ENCODE measurements at regions of chr15 and their contacts with region 1.

Region 1: DNA sequence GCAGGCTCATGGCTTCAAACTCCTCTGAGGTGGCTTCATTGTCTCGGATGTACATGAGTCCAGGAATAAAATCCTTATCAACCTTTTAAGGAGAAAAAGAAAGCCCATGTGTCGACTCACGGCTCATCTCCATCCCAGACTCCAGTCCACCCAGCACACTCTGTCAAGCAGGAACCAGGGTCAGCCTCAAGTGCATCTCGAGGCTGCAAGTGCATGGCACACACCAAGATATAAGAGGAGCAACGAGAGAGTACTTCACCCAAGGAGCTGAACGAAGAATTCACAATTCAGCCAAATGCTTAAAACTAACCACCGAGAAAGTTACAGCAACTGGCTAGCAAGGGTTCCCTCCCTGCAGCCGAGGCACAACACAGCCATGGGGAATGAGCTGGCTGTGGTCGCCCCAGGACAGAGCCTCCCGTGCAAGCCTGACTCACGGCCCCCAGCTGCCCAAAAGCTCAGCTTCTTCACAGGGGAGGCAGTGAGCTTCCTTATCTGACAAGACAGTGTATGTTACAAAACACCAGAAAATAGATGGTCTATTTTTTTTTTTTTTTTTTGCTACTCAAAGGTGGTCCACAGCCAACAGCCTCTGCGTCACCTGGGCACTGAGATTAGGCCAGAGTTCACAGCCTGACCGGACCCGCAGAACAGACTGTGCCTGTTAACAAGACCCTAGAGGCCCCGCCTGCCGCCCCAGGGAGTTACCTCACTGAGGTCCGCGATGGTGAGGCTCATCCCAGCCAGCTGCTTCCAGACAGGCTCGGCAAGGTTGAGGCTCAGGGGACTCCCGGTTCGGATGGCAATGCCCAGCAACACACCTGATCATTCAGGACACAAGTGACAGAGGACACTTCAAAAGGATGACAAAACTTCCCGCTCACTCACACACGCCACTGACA is 15.9 kb upstream of the OCA2 start:
- DNase-seq: peak in 1 of 3 donors; percentile 37
- ATAC-seq: no peak
- H3K4me3 ChIP-seq: no peak overlapping the region
- H3K27ac ChIP-seq: no peak overlapping the region
- H3K4me1 ChIP-seq: no peaks in the 10 kb centered on the region
- H3K27me3 ChIP-seq: no peaks in the 10 kb centered on the region

Region 2: GRCh38 chr15:28080386-28080785 is 34.6 kb before region 1 on chr15:
- intact Hi-C with region 1: loop called in 1 of 4 experiments (anchors 5 kb)
- DNase-seq: no peak
- ATAC-seq: no peak
- H3K4me3 ChIP-seq: no peak overlapping the region
- H3K27ac ChIP-seq: no peak overlapping the region
- H3K4me1 ChIP-seq: no peaks in the 10 kb centered on the region
- H3K27me3 ChIP-seq: no peaks in the 10 kb centered on the region

Region 3: GRCh38 chr15:28169366-28169765 is 54.4 kb after region 1 on chr15:
- intact Hi-C with region 1: loop called in 1 of 4 experiments (anchors 5 kb)
- DNase-seq: no peak
- ATAC-seq: no peak
- H3K4me3 ChIP-seq: no peak overlapping the region
- H3K27ac ChIP-seq: no peak overlapping the region
- H3K4me1 ChIP-seq: no peaks in the 10 kb centered on the region
- H3K27me3 ChIP-seq: no peaks in the 10 kb centered on the region